ENCODE measurements at regions of chr1 and their contacts with region 1.

Region 1: GRCh38 chr1:151292207-151293030 is 10.3 kb downstream of the ZNF687 start:
- DNase-seq: no peak
- H3K4me3 ChIP-seq: no peak overlapping the region
- H3K4me3 Mint-ChIP-seq: no peak overlapping the region
- H3K27ac ChIP-seq: no peak overlapping the region
- H3K27ac Mint-ChIP-seq: peak overlapping the region in 4 of 7 donors; percentile 17 to 84 (median 59)
- H3K4me1 ChIP-seq: no peaks in the 10 kb centered on the region
- H3K4me1 Mint-ChIP-seq: peaks cover 2 to 9% (median 8%) of the 10 kb centered on the region in 4 donors
- H3K27me3 ChIP-seq: no peaks in the 10 kb centered on the region
- H3K27me3 Mint-ChIP-seq: no peaks in the 10 kb centered on the region

Region 2: DNA sequence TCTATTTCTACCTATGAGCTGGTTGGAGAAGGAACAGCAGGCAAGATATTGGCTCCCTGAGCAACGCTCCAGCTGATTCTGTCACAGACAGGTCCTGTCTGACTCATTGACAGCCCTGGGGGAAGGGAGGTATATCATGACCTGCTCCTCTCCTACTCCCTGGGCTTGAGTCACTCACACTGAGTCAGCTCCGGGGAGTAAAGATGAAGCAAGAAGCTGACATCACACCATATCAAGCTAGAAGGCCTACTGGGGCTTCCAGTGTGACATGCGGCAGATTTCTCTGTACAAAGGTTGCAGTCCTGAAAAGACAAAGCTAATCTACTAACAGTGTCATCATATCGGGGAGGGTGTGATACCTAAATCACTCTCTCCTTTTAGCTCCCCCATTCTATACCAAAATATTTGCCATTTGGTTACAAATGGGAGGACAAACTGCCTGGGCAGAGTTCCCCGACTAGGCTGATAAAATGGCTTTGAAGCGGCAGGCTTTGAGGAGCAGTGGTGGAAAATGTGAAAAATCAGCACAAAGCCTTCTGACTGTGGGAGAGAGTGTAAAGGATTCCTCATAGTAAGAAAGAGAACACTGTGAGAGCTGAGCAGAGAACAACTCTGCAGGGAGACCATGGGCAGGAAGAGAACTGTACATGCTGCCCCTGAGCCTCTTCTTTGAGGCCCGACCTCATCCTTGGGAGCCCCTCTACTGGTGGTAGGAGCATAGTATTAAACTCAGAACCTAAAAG is 19.3 kb after region 1 on chr1:
- CTCF ChIA-PET with region 1: interaction called, 3 read pairs
- POLR2A ChIA-PET with region 1: interaction called, 11 read pairs
- intact Hi-C with region 1: no loop called
- DNase-seq: peak in 3 of 5 donors; percentile 17 to 90 (median 22)
- H3K4me3 ChIP-seq: no peak overlapping the region
- H3K4me3 Mint-ChIP-seq: peak overlapping the region in 5 of 8 donors; percentile 5 to 37 (median 14)
- H3K27ac ChIP-seq: no peak overlapping the region
- H3K27ac Mint-ChIP-seq: peak overlapping the region; percentile 29 to 84 (median 78)
- H3K4me1 ChIP-seq: peaks cover 37% of the 10 kb centered on the region
- H3K4me1 Mint-ChIP-seq: peaks cover 25 to 53% (median 35%) of the 10 kb centered on the region in 4 donors
- H3K27me3 ChIP-seq: no peaks in the 10 kb centered on the region
- H3K27me3 Mint-ChIP-seq: no peaks in the 10 kb centered on the region